MCF 10A (cell line): ENCODE measurements at regions of chr6 and their contacts with region 1.

Region 1: DNA sequence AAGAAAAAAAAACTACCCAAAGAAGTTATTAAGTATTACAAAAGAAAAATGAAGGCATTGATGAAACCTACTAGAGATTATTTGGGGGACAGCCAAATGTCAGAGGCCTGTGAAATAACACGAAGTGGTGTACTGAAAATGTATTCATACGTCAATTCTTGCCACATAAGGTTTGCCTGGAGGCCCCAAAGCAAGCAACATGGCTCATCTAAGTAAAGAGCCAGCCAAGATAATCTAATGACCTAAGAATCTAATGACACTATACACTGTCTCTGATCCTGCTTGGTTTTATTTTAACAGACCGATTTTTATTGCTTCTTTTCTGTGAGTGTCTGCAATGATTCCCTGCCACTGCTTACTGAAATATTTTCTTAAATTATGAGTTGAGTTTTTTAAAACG is 34.7 kb downstream of the FILIP1 start:
- DNase-seq: peak; percentile 92
- H3K4me3 Mint-ChIP-seq: no peak overlapping the region
- H3K27ac Mint-ChIP-seq: peak overlapping the region; percentile 42
- H3K4me1 Mint-ChIP-seq: peaks cover 7% of the 10 kb centered on the region
- H3K27me3 Mint-ChIP-seq: no peaks in the 10 kb centered on the region
- CTCF ChIP-seq: no peak

Region 2: DNA sequence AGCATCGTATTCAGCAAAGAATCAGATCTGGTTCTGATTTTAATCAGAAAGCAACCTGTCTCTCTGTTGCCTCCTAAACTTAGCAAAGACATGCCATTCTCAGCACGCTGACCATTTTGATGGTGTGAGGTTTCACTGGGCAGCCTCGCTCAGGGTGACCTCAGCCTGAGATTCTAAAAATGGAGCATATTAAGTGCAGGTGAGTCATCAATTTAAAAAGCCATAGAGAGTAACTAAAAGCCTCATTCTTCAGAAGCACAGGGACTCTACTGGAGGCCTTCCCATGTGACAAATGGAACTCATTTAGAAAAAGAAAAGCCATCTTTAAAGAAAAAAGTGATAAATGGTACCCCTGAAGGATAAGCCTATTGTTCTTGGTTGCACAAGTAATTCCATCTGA is 56.6 kb before region 1 on chr6:
- CTCF ChIA-PET with region 1: no interaction called
- POLR2A ChIA-PET with region 1: no interaction called
- intact Hi-C with region 1: no loop called
- DNase-seq: peak; percentile 47
- H3K4me3 Mint-ChIP-seq: no peak overlapping the region
- H3K27ac Mint-ChIP-seq: no peak overlapping the region
- H3K4me1 Mint-ChIP-seq: peaks cover 8% of the 10 kb centered on the region
- H3K27me3 Mint-ChIP-seq: peaks cover 12% of the 10 kb centered on the region
- CTCF ChIP-seq: no peak

Region 3: DNA sequence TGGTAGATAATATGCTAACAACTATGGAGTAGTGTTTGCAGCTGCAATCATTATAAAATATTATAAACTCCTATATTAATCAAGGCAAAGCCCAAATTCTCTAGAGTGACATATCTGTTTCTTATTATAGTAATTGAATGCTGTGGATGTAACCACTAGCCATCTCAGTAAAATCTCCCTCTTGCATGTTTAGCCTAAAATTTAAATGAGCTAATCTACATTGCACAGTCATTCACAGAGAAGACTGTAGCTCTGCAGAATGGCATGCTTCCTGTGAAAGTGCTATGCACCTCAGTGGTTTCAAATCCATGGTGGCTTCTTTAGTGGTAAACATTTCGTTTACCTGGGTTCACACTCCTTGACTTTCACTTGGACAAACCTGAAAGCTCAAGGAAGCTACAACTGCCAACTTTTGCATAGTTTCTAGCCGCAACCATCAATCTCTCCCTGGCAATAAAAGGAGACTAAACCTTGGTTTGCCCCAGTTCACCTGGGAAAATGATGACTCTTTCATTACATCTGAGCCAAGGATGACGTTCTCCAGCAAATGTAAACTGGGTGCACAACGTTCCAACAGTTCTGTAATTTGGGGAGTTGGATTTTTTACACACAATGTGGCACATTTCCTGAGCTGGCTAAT is 12.5 kb before region 1 on chr6:
- CTCF ChIA-PET with region 1: no interaction called
- POLR2A ChIA-PET with region 1: interaction called, 11 read pairs
- intact Hi-C with region 1: no loop called
- DNase-seq: no peak
- H3K4me3 Mint-ChIP-seq: no peak overlapping the region
- H3K27ac Mint-ChIP-seq: no peak overlapping the region
- H3K4me1 Mint-ChIP-seq: no peaks in the 10 kb centered on the region
- H3K27me3 Mint-ChIP-seq: no peaks in the 10 kb centered on the region
- CTCF ChIP-seq: no peak